HAP-1 (cell line): ENCODE measurements at regions of chr16 and their contacts with region 1.

Region 1: DNA sequence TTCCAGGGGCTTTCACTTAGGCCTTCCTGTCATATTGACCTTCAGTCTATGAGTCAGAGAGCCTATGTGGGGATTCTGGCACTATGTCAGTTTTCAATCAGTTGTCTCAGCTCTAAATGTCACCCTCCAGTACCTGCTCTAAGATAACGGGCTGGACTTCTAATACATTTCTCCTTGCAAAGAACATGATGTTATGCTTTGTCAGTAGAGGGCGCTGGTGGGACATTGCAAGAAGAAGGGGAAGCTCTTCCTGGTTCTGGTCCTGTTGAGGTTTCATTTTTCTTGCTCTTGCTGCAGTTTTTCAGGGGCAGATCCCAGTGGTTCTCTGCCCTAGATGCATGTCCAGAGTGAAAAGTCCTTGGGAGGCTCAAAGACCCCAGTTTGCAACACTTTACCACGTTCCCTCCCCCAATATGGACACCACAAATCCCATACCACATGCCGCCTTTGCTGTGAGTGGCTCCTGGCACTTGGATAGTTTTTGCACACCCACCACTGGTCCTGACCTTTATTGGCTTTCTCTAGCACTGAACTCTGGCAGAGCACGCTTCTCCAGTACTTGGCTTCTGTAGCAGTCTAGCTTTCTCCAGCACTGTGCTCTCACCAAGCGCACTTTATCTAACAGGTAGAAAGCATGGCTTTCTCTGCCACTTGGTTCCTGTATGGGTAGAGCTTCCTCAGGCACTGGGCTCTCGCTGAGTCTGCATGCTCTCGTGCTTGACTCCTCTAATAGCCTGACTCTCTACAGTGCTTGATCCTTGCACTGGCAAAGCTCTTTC is 49.0 kb downstream of the BCL7C start:
- DNase-seq: peak; percentile 68 to 91
- H3K4me3 ChIP-seq: no peak overlapping the region
- H3K4me1 ChIP-seq: no peaks in the 10 kb centered on the region
- H3K27me3 ChIP-seq: no peaks in the 10 kb centered on the region

Region 2: GRCh38 chr16:30914830-30915229 is 70.0 kb after region 1 on chr16:
- in situ Hi-C with region 1: loop called (anchors 5 kb)
- DNase-seq: no peak
- H3K4me3 ChIP-seq: no peak overlapping the region
- H3K4me1 ChIP-seq: no peaks in the 10 kb centered on the region
- H3K27me3 ChIP-seq: no peaks in the 10 kb centered on the region